Activated CD8-positive, alpha-beta T cell treated with anti-CD3 and anti-CD28 coated beads for 36 hours (primary cell): ENCODE measurements at regions of chr1 and their contacts with region 1.

Region 1: DNA sequence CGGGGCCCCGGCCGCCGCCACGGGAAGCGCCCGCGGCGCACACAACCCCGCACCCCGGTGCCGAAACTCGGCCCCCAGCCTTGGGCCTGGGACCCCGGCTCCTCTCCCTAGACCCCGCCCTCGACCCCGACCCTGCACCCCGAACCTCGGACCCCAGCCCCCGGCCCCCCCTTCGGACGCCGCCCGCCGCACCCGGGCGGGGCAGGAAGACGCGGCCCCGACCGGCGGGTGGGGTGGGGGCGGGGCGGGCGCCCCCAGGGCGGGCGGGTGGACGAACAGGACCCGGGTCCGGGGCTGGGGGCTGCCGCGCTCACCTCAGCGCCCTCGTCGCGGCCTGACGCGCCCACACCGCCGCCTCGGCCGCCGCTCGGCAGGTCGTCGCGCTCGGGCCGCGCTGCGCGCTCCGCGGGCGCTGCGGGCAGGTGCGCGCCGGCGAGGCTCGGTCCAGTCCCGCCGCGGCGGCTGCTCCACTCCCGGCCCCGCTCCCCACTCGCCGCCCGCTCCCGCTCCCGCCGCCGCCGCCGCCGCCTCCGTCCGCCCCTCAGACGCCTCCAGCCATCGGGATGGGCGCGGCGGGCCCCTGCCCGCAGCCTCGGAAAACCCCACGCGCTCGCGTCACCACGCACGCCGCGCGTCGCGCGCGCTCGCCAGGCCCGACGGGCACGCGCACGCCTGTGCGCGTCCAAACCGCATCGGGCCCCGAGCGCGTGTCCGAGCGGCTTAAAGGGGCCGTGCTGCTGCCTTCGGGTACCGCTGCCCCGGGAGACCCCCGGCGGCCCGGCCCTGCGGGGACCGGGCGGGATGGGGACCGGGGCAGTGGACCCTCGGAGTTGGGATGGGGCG is at the start of gene GNB1:
- DNase-seq: peak; percentile 84
- ATAC-seq: peak; percentile 51
- H3K4me3 Mint-ChIP-seq: peak within 1 kb of the TSS; percentile 85
- H3K27ac Mint-ChIP-seq: peak within 1 kb of the TSS; percentile 90
- H3K4me1 Mint-ChIP-seq: peaks cover 52% of the 10 kb centered on the region
- H3K27me3 Mint-ChIP-seq: peaks cover under 1% of the 10 kb centered on the region
- CTCF ChIP-seq: no peak
- total RNA-seq, gene GNB1: 318 to 330 TPM

Region 2: DNA sequence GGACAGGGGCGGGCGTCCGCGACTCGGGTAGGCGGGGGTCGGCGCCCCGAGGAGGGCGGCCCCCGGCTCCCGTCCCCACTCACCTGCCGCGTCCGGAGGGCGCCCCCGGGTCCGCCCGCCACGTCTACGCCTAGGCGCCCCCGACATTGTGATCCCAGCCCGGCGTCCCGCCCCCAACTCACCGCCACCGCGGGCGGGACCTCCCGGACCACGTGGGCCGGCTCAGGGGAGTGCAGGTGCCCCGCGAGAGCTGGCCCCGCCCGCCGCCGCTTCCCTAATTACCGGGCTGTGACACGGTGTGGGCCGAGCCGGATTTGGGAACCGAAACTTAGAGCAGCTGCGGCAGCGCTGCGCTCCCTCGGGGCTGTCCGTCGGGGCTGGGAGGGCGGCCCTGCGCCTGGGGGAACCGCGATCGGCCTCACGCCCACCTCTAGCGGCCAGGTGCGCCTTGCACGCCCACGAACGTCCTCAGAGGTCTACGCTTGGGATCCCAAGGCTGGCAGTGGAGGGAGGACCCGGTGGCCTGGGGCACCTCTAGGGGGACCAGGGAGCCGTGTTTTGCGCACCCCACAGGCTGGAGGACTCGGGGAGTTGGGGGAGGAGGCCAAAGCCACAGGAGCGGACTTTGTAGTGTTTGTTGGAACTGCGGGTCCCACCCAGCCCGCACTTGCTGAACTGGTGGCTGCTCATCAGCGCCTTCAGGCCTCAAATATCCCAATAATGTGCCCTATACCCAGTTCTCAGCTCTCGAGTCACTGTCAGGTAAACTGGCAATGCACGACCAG is 111.9 kb before region 1 on chr1:
- CTCF ChIA-PET with region 1: no interaction called
- POLR2A ChIA-PET with region 1: interaction called, 4 read pairs
- intact Hi-C with region 1: loop called (anchors 10 kb)
- DNase-seq: peak; percentile 90
- ATAC-seq: peak; percentile 68
- H3K4me3 Mint-ChIP-seq: peak overlapping the region; percentile 49
- H3K27ac Mint-ChIP-seq: peak overlapping the region; percentile 89
- H3K4me1 Mint-ChIP-seq: peaks cover 66% of the 10 kb centered on the region
- H3K27me3 Mint-ChIP-seq: no peaks in the 10 kb centered on the region
- CTCF ChIP-seq: peak; percentile 26

Region 3: GRCh38 chr1:1876335-1876930 is 14.3 kb before region 1 on chr1:
- CTCF ChIA-PET with region 1: interaction called, 10 read pairs
- POLR2A ChIA-PET with region 1: interaction called, 13 read pairs
- intact Hi-C with region 1: no loop called
- DNase-seq: no peak
- ATAC-seq: no peak
- H3K4me3 Mint-ChIP-seq: no peak overlapping the region
- H3K27ac Mint-ChIP-seq: peak overlapping the region; percentile 90
- H3K4me1 Mint-ChIP-seq: peaks cover 78% of the 10 kb centered on the region
- H3K27me3 Mint-ChIP-seq: no peaks in the 10 kb centered on the region
- CTCF ChIP-seq: no peak